ENCODE measurements at regions of chr6 and their contacts with region 1.

Region 1: GRCh38 chr6:136643850-136644596 is 93.8 kb upstream of the MAP7 start:
- DNase-seq: peak; percentile 68 to 76 (median 70)
- H3K4me3 ChIP-seq: no peak overlapping the region
- H3K4me3 Mint-ChIP-seq: no peak overlapping the region
- H3K27ac ChIP-seq: peak overlapping the region; percentile 4
- H3K27ac Mint-ChIP-seq: peak overlapping the region; percentile 30 to 75 (median 61)
- H3K4me1 ChIP-seq: peaks cover 19% of the 10 kb centered on the region
- H3K4me1 Mint-ChIP-seq: peaks cover 0 to 5% (median 4%) of the 10 kb centered on the region in 4 donors
- H3K27me3 ChIP-seq: no peaks in the 10 kb centered on the region
- H3K27me3 Mint-ChIP-seq: no peaks in the 10 kb centered on the region

Region 2: DNA sequence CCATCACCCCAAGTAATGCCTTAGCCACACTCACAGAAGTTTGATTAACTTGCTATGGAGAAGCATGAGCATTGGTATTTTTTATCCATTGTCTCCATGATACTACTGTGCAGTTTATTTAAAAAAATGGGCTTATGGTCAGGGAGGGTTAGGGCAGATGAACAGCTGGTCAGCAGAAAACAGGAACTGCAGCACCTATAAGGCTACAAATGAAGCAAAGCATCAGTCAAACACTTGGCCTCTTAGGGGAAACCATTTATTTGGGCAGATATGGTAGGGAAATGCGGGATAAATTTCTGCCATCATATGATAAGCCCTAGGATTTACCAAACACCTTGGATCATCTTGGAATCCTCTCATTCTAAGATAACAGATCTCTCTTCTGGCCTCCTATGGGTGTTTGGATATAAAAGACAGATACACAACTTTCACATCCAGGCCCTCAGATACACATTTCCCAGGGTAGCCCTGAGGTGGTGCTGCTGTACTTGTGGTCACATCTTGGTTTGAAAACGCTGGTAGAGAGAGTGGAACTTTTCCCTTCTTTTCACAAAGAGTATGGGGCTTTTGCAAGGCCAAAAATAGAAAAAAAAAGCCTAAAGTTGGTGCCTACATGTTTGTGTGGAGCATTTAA is 1103.7 kb before region 1 on chr6:
- CTCF ChIA-PET with region 1: no interaction called
- POLR2A ChIA-PET with region 1: no interaction called
- intact Hi-C with region 1: no loop called
- DNase-seq: no peak
- H3K4me3 ChIP-seq: no peak overlapping the region
- H3K4me3 Mint-ChIP-seq: no peak overlapping the region
- H3K27ac ChIP-seq: no peak overlapping the region
- H3K27ac Mint-ChIP-seq: no peak overlapping the region
- H3K4me1 ChIP-seq: no peaks in the 10 kb centered on the region
- H3K4me1 Mint-ChIP-seq: peaks cover 2 to 6% (median 4%) of the 10 kb centered on the region in 4 donors
- H3K27me3 ChIP-seq: no peaks in the 10 kb centered on the region
- H3K27me3 Mint-ChIP-seq: peaks cover 10 to 14% of the 10 kb centered on the region in 2 donors

Region 3: GRCh38 chr6:136657666-136658065 is 13.6 kb after region 1 on chr6:
- CTCF ChIA-PET with region 1: interaction called, 27 read pairs
- POLR2A ChIA-PET with region 1: interaction called, 3 read pairs
- intact Hi-C with region 1: no loop called
- DNase-seq: no peak
- H3K4me3 ChIP-seq: no peak overlapping the region
- H3K4me3 Mint-ChIP-seq: no peak overlapping the region
- H3K27ac ChIP-seq: no peak overlapping the region
- H3K27ac Mint-ChIP-seq: peak overlapping the region in 2 of 7 donors; percentile 25 to 51
- H3K4me1 ChIP-seq: no peaks in the 10 kb centered on the region
- H3K4me1 Mint-ChIP-seq: peaks cover 0 to 5% (median 0%) of the 10 kb centered on the region in 4 donors
- H3K27me3 ChIP-seq: no peaks in the 10 kb centered on the region
- H3K27me3 Mint-ChIP-seq: no peaks in the 10 kb centered on the region

Region 4: DNA sequence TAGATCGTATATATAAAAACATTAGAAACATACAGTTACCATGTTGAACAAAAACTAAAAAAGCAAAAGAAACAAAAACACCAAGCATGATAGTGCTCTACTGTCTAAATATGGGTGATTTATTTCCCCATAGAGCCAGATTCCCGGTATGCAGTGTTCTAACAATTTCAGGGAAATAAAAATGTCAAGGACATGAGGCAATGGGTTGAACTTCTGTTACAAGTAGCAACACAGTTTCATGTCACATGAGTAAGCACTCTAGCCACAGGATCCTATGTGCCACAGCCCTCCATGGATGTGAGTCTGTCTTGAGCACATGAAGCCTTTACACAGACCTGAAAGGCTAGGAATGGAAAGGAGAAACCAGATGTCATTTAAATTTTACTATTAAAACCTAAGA is 52.2 kb after region 1 on chr6:
- CTCF ChIA-PET with region 1: interaction called, 34 read pairs
- POLR2A ChIA-PET with region 1: no interaction called
- intact Hi-C with region 1: loop called (anchors 2 kb)
- DNase-seq: no peak
- H3K4me3 ChIP-seq: no peak overlapping the region
- H3K4me3 Mint-ChIP-seq: no peak overlapping the region
- H3K27ac ChIP-seq: no peak overlapping the region
- H3K27ac Mint-ChIP-seq: peak overlapping the region in 1 of 7 donors; percentile 6
- H3K4me1 ChIP-seq: peaks cover 13% of the 10 kb centered on the region
- H3K4me1 Mint-ChIP-seq: peaks cover 15 to 26% (median 18%) of the 10 kb centered on the region in 4 donors
- H3K27me3 ChIP-seq: no peaks in the 10 kb centered on the region
- H3K27me3 Mint-ChIP-seq: no peaks in the 10 kb centered on the region

Region 5: GRCh38 chr6:136737871-136738691 is 94.1 kb after region 1 on chr6:
- CTCF ChIA-PET with region 1: interaction called, 25 read pairs
- POLR2A ChIA-PET with region 1: no interaction called
- intact Hi-C with region 1: no loop called
- DNase-seq: no peak
- H3K4me3 ChIP-seq: no peak overlapping the region
- H3K4me3 Mint-ChIP-seq: no peak overlapping the region
- H3K27ac ChIP-seq: no peak overlapping the region
- H3K27ac Mint-ChIP-seq: peak overlapping the region in 1 of 7 donors; percentile 51
- H3K4me1 ChIP-seq: peaks cover 22% of the 10 kb centered on the region
- H3K4me1 Mint-ChIP-seq: peaks cover 33 to 68% (median 55%) of the 10 kb centered on the region in 4 donors
- H3K27me3 ChIP-seq: no peaks in the 10 kb centered on the region
- H3K27me3 Mint-ChIP-seq: no peaks in the 10 kb centered on the region

Region 6: DNA sequence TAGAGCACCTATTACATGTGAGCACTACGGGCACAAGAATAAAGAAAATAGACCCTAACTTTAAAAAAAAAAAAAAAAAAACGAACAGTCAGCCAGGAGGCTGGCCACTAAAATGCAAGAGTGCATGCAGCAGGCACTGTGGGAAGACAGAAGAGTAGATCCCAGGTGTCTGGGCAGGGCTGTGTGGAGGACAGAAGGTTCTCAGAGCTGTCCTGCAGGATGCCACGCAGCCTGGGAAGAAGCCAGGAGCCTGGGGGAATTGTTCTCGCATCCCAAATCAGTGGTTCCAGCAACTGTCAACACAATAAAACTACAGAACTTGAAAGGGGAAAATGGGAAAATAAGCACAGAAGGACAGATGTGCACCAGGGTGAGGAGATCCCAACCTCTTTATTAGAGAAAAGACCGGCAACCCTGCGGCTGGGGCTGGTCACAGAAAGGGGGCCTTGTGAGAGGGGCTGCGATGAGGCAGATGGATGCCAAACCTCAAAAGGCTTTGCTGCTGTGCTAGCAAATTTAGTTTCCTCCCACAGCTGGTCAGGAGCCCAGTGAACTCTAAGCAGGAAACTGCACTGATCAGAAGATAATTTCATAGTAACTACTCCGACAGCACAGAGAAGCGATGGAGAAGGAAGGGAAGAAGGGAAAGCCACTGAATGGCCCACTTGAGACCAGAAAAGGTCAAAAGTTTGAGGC is 117.4 kb after region 1 on chr6:
- CTCF ChIA-PET with region 1: interaction called, 32 read pairs
- POLR2A ChIA-PET with region 1: interaction called, 4 read pairs
- intact Hi-C with region 1: no loop called
- DNase-seq: peak in 3 of 5 donors; percentile 44 to 52 (median 48)
- H3K4me3 ChIP-seq: peak overlapping the region in 1 of 2 donors; percentile 4
- H3K4me3 Mint-ChIP-seq: peak overlapping the region; percentile 76 to 91 (median 84)
- H3K27ac ChIP-seq: peak overlapping the region; percentile 53
- H3K27ac Mint-ChIP-seq: peak overlapping the region; percentile 77 to 95 (median 92)
- H3K4me1 ChIP-seq: peaks cover 78% of the 10 kb centered on the region
- H3K4me1 Mint-ChIP-seq: peaks cover 62 to 68% (median 67%) of the 10 kb centered on the region in 4 donors
- H3K27me3 ChIP-seq: no peaks in the 10 kb centered on the region
- H3K27me3 Mint-ChIP-seq: no peaks in the 10 kb centered on the region

Region 7: GRCh38 chr6:136927292-136927691 is 283.3 kb after region 1 on chr6:
- CTCF ChIA-PET with region 1: interaction called, 9 read pairs
- POLR2A ChIA-PET with region 1: no interaction called
- intact Hi-C with region 1: loop called (anchors 1 kb)
- DNase-seq: peak in 3 of 5 donors; percentile 4 to 10 (median 7)
- H3K4me3 ChIP-seq: no peak overlapping the region
- H3K4me3 Mint-ChIP-seq: no peak overlapping the region
- H3K27ac ChIP-seq: no peak overlapping the region
- H3K27ac Mint-ChIP-seq: no peak overlapping the region
- H3K4me1 ChIP-seq: peaks cover 12% of the 10 kb centered on the region
- H3K4me1 Mint-ChIP-seq: peaks cover 3 to 15% (median 12%) of the 10 kb centered on the region in 4 donors
- H3K27me3 ChIP-seq: peaks cover 13% of the 10 kb centered on the region
- H3K27me3 Mint-ChIP-seq: peaks cover 28 to 35% of the 10 kb centered on the region in 2 donors